ENCODE measurements at regions of chr1 and their contacts with region 1.

Region 1: GRCh38 chr1:76268341-76268740 is 193.8 kb downstream of the ST6GALNAC3 start:
- DNase-seq: no peak
- ATAC-seq: no peak
- H3K4me3 ChIP-seq: no peak overlapping the region
- H3K27ac ChIP-seq: peak overlapping the region in 1 of 12 donors; percentile 72
- H3K4me1 ChIP-seq: peaks cover 0 to 44% (median 8%) of the 10 kb centered on the region in 12 donors
- H3K27me3 ChIP-seq: no peaks in the 10 kb centered on the region
- CTCF ChIP-seq: no peak
- POLR2A ChIP-seq: no peak

Region 2: DNA sequence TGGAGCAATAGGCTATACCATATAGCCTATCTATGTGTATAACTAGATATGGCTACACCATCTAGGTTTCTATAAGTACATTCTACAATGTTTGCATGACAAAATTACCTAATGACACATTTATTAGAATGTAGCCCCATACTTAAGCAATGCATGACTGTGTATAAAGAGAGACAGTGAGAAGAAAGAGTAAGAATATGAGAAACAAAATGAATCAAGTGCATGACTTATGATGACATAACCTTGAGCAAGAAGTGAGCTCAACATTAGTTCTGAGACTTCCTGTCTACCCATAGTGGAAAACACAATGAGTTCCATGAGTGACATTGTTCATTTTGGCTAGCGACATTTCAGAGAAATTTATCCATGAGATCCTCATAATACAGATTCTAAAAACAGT is 667.6 kb before region 1 on chr1:
- intact Hi-C with region 1: no loop called
- DNase-seq: no peak
- ATAC-seq: no peak
- H3K4me3 ChIP-seq: no peak overlapping the region
- H3K27ac ChIP-seq: no peak overlapping the region
- H3K4me1 ChIP-seq: no peaks in the 10 kb centered on the region
- H3K27me3 ChIP-seq: no peaks in the 10 kb centered on the region
- CTCF ChIP-seq: no peak
- POLR2A ChIP-seq: no peak

Region 3: GRCh38 chr1:76285578-76286135 is 17.3 kb after region 1 on chr1:
- intact Hi-C with region 1: loop called in 1 of 10 experiments (anchors 1 kb)
- DNase-seq: no peak
- ATAC-seq: no peak
- H3K4me3 ChIP-seq: no peak overlapping the region
- H3K27ac ChIP-seq: no peak overlapping the region
- H3K4me1 ChIP-seq: peaks cover 0 to 9% (median 0%) of the 10 kb centered on the region in 12 donors
- H3K27me3 ChIP-seq: no peaks in the 10 kb centered on the region
- CTCF ChIP-seq: no peak
- POLR2A ChIP-seq: no peak